ENCODE measurements at regions of chr15 and their contacts with region 1.

Region 1: DNA sequence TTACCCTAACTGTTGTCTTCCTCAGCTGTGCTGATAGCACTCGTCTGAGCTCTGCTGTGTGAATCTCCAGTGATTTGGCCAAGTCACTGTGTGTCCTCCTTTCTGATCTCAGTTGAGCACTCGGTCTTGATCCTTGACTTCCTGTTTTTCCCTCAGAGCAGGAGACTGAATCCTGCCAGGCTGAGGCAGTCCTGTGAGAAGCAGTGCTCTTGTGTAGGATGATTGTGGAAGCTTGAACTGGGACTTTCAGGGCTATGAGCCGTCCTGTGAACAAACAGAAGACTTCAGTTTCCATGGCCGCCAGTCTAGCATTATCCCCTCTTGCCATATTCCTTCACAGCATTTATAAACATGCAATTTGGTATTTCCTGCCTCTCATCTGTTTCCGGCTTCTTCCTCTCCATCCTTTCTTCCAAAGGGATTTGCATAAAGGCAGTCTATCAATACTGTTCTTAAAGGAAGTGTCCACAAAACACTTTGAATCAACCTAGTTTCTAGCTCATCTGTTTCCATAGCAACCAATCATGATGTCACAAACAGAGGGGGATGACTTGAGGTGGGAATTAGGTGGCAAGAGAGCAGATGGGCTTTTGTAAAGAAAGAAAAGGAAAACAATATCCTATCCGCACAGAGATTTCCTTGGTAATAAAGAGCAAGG is 237.2 kb downstream of the AGBL1 start:
- DNase-seq: no peak
- H3K4me3 ChIP-seq: no peak overlapping the region
- H3K27ac ChIP-seq: no peak overlapping the region
- H3K4me1 ChIP-seq: no peaks in the 10 kb centered on the region
- H3K27me3 ChIP-seq: no peaks in the 10 kb centered on the region
- CTCF ChIP-seq: no peak
- EP300 ChIP-seq: no peak
- POLR2A ChIP-seq: no peak

Region 2: GRCh38 chr15:86327230-86327865 is 10.5 kb after region 1 on chr15:
- in situ Hi-C with region 1: no loop called
- intact Hi-C with region 1: loop called (anchors 1 kb)
- DNase-seq: no peak
- H3K4me3 ChIP-seq: no peak overlapping the region
- H3K27ac ChIP-seq: no peak overlapping the region
- H3K4me1 ChIP-seq: no peaks in the 10 kb centered on the region
- H3K27me3 ChIP-seq: no peaks in the 10 kb centered on the region
- CTCF ChIP-seq: no peak
- EP300 ChIP-seq: no peak
- POLR2A ChIP-seq: no peak

Region 3: GRCh38 chr15:86608461-86609205 is 291.8 kb after region 1 on chr15:
- in situ Hi-C with region 1: no loop called
- intact Hi-C with region 1: no loop called
- DNase-seq: no peak
- H3K4me3 ChIP-seq: no peak overlapping the region
- H3K27ac ChIP-seq: no peak overlapping the region
- H3K4me1 ChIP-seq: peaks cover 0 to 9% (median 2%) of the 10 kb centered on the region in 4 donors
- H3K27me3 ChIP-seq: no peaks in the 10 kb centered on the region
- CTCF ChIP-seq: no peak
- EP300 ChIP-seq: no peak
- POLR2A ChIP-seq: no peak